PC-9 (cell line): ENCODE measurements at regions of chrX and their contacts with region 1.

Region 1: DNA sequence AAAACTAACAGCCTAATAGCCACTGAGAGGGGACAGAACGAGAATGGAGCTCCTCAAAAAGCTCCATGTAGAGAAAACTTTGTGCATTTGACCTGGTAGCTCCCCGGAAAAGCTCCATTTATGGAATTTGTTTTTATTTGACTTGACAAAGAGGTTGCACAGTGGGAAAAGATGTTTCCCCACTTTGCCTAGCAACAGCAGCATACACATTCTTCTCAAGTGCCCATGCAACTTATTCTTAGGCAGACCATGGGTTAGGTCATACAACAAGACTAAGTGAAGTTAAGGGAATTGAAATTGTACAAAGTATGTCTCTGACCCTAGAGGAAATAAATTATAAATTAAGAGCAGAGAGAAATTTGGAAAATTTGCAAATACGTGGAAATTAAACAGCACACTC is 949.6 kb upstream of the PRKX start:
- DNase-seq: peak in 1 of 2 experiments; percentile 43
- H3K4me3 ChIP-seq: no peak overlapping the region
- H3K27ac ChIP-seq: no peak overlapping the region
- H3K4me1 ChIP-seq: 0 out of 2 replicates have a peak, but pooled peaks cover 4% of the 10 kb centered on the region
- H3K27me3 ChIP-seq: no peaks in the 10 kb centered on the region
- CTCF ChIP-seq: no peak

Region 2: DNA sequence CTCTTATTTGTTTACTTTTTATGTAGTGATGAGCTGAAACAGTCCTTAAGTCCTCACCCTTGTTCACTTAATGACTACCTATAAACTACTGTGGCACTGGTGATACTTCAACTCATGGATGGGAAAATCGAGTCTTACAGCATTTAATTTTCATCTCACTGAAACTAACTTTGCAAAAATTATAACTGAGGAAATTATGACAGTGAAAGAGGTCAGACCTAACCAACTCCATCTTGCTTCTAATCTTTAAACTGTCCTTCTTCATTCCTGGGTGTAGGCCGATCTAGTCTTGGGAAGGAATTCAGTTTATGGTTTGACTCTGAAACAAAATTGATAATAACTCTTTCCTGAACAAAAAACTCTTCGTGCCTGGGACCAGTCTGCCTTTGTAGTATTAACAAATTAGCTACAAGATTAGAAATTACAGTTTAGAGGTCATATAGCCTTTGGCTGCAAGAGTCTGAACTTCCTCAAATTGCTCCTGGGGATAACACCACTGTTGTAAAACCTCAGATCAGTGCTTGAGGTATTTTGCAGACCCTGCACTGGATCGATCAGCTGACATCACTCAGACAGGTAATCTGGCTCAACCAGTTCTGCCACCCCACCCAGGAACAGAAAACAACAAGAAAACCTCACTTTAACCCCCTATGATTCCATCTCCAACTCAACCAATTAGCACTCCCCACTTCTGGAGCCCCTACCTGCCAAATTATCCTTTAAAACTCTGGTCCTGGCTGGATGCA is 46.1 kb after region 1 on chrX:
- CTCF ChIA-PET with region 1: no interaction called
- POLR2A ChIA-PET with region 1: no interaction called
- intact Hi-C with region 1: loop called (anchors 5 kb)
- DNase-seq: peak in 1 of 2 experiments; percentile 45
- H3K4me3 ChIP-seq: no peak overlapping the region
- H3K27ac ChIP-seq: peak overlapping the region; percentile 35; the same call in 1 of the 2 replicates
- H3K4me1 ChIP-seq: peaks cover 25% of the 10 kb centered on the region
- H3K27me3 ChIP-seq: no peaks in the 10 kb centered on the region
- CTCF ChIP-seq: no peak

Region 3: DNA sequence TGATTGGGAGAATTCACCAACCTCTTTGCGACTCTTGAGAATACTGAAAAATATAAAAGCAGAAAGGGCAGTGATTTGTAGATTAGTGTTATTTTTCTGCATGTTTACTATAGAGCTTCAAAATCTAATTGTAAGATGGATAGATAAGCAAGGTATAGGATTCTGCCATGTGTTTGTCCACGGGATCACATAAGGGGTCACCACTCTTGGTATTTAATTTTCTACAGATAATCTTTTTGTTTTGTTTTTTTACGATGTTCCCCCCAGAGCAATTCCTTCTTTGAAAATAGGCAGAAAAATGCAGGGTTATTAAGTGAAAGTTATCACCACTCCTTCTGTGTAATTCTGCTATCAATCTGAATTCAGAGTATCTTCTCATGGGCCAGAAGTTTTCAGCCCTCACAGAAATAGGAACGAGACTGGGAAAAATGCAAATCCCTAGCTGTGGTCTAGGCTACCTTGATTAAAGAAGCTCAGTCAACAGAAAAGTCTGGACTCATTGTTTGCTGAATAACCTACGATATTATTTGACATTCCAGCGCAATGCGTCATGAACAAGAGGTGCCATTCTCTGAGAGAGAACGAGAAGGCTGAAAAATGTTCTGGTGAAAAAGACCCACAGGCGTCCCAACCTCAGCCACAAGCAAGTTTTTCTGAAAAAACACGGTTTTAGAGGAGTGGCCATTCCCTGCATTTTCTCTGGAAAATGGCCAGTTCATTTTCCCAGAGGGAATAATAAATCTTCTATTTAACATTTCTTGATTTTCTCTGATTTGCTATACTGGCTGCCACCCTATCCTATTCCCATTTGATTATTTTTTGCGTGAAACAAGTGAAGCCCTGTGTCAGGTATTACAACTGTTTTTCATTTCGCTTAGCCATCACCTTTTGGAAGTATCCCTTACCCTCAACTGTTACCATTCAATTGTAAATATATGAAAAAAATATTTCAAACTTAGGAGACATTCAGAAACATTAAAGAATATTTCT is 167.8 kb after region 1 on chrX:
- CTCF ChIA-PET with region 1: no interaction called
- POLR2A ChIA-PET with region 1: no interaction called
- intact Hi-C with region 1: loop called (anchors 10 kb)
- DNase-seq: peak; percentile 43 to 82
- H3K4me3 ChIP-seq: no peak overlapping the region
- H3K27ac ChIP-seq: peak overlapping the region; percentile 39
- H3K4me1 ChIP-seq: peaks cover 12% of the 10 kb centered on the region
- H3K27me3 ChIP-seq: no peaks in the 10 kb centered on the region
- CTCF ChIP-seq: no peak